Activated CD4-positive, alpha-beta memory T cell treated with anti-CD3 and anti-CD28 coated beads for 36 hours (primary cell): ENCODE measurements at regions of chr7 and their contacts with region 1.

Region 1: GRCh38 chr7:28292834-28293526 is 112.4 kb upstream of the JAZF1 start:
- DNase-seq: peak; percentile 17
- H3K4me3 Mint-ChIP-seq: no peak overlapping the region
- H3K27ac Mint-ChIP-seq: no peak overlapping the region
- H3K4me1 Mint-ChIP-seq: peaks cover 18% of the 10 kb centered on the region
- H3K27me3 Mint-ChIP-seq: peaks cover 43% of the 10 kb centered on the region

Region 2: GRCh38 chr7:28207486-28208158 is 85.4 kb before region 1 on chr7:
- CTCF ChIA-PET with region 1: no interaction called
- POLR2A ChIA-PET with region 1: interaction called, 5 read pairs
- intact Hi-C with region 1: loop called (anchors 2 kb)
- DNase-seq: no peak
- H3K4me3 Mint-ChIP-seq: no peak overlapping the region
- H3K27ac Mint-ChIP-seq: no peak overlapping the region
- H3K4me1 Mint-ChIP-seq: peaks cover 32% of the 10 kb centered on the region
- H3K27me3 Mint-ChIP-seq: peaks cover 19% of the 10 kb centered on the region

Region 3: DNA sequence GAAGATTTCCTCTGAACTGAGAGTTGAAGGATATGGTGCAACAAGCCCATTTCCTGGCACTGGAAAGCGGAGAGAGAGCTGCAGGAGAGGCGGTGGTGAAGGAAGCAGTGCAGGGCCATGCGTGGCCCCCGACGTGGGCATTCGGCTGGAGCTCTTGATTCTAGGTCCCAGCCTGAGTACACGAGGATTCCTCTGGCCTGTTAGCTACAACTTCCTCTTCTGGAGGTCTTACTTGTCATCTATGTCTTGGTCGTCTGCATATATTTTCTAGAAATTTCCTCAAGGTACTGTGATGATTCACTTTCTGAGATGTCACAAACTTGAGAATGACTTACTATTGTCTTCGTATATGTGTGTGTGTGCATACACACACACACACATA is 53.2 kb before region 1 on chr7:
- CTCF ChIA-PET with region 1: no interaction called
- POLR2A ChIA-PET with region 1: no interaction called
- intact Hi-C with region 1: loop called (anchors 1 kb)
- DNase-seq: peak; percentile 12
- H3K4me3 Mint-ChIP-seq: no peak overlapping the region
- H3K27ac Mint-ChIP-seq: no peak overlapping the region
- H3K4me1 Mint-ChIP-seq: peaks cover 9% of the 10 kb centered on the region
- H3K27me3 Mint-ChIP-seq: peaks cover 43% of the 10 kb centered on the region

Region 4: DNA sequence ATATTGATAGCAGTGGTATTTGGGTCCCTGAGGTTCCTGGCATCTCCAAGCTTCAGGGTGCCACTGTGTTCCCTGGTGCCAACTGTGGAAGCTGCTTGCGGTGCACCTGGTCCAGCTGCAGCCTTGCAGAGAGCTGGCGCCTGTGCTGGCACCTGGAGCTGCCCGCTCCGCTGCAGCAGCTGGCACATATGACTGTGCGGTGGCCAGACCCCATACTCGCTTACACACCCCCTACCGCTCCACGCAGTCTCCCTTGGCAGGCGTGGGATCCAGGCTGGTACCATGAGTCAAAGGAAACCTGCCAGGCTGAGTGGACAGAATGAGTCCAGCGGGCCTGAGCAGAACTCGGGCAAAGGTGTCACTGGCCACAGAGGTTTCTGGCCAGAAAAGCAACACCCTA is 22.4 kb before region 1 on chr7:
- CTCF ChIA-PET with region 1: no interaction called
- POLR2A ChIA-PET with region 1: no interaction called
- intact Hi-C with region 1: no loop called
- DNase-seq: no peak
- H3K4me3 Mint-ChIP-seq: no peak overlapping the region
- H3K27ac Mint-ChIP-seq: no peak overlapping the region
- H3K4me1 Mint-ChIP-seq: peaks cover 7% of the 10 kb centered on the region
- H3K27me3 Mint-ChIP-seq: peaks cover 39% of the 10 kb centered on the region

Region 5: GRCh38 chr7:28329661-28330363 is 36.8 kb after region 1 on chr7:
- CTCF ChIA-PET with region 1: interaction called, 4 read pairs
- POLR2A ChIA-PET with region 1: interaction called, 4 read pairs
- intact Hi-C with region 1: loop called (anchors 1 kb)
- DNase-seq: peak; percentile 11
- H3K4me3 Mint-ChIP-seq: no peak overlapping the region
- H3K27ac Mint-ChIP-seq: no peak overlapping the region
- H3K4me1 Mint-ChIP-seq: peaks cover 33% of the 10 kb centered on the region
- H3K27me3 Mint-ChIP-seq: peaks cover 8% of the 10 kb centered on the region

Region 6: GRCh38 chr7:28442540-28443420 is 149.8 kb after region 1 on chr7:
- CTCF ChIA-PET with region 1: no interaction called
- POLR2A ChIA-PET with region 1: no interaction called
- intact Hi-C with region 1: loop called (anchors 2 kb)
- DNase-seq: peak; percentile 9
- H3K4me3 Mint-ChIP-seq: no peak overlapping the region
- H3K27ac Mint-ChIP-seq: no peak overlapping the region
- H3K4me1 Mint-ChIP-seq: peaks cover 13% of the 10 kb centered on the region
- H3K27me3 Mint-ChIP-seq: peaks cover 30% of the 10 kb centered on the region